Activated CD4-positive, alpha-beta memory T cell treated with anti-CD3 and anti-CD28 coated beads, Interleukin-2, amount 10 ng/mL, durations not matched to agents 7 days and 5 days (primary cell): ENCODE measurements at regions of chr6 and their contacts with region 1.

Region 1: GRCh38 chr6:42879372-42880239 is at the start of gene RPL7L1:
- DNase-seq: peak; percentile 86
- H3K4me3 Mint-ChIP-seq: peak within 1 kb of the TSS; percentile 94
- H3K27ac Mint-ChIP-seq: peak within 1 kb of the TSS; percentile 92
- H3K4me1 Mint-ChIP-seq: peaks cover 31% of the 10 kb centered on the region
- H3K27me3 Mint-ChIP-seq: no peaks in the 10 kb centered on the region
- total RNA-seq, gene RPL7L1: 71.4 to 74.2 TPM

Region 2: DNA sequence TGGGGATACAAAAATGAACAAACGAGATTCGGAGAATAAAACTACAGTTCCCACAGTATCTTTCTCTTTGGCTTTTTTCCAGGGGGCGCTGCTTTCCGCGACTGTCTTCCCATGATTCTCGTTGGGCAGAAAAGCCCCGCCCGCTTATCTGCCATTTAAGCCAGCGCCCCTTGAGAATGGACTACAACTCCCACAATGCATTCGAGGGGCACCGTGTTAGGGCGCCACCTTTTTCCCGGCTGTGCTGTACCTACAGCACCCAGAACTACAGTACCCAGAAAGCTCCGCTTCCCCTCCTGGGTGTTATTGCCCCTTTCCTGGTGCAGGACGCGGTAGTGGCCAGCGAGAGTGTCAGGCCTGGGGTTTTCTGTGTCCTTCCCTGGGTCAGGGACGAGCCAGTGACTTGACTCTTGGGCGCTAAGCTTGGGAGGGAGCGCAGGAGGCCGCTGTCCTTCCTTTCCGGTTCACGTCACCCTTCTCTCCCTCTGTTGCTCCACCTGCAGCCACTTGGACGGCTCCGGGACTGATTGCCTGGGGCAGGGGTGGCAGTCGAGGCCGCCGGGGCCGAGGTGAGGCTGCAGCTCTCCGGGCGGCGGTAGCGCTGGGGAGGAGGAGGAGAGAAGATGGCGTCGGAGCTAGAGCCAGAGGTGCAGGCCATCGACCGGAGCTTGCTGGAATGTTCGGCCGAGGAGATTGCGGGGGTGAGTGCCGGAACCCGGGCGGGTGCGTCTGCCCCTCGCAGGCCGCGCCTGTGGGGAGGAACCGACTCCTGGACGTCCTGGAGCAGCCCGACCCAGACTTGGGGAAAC is 315.7 kb before region 1 on chr6 and contains the start of gene UBR2:
- CTCF ChIA-PET with region 1: interaction called, 3 read pairs
- POLR2A ChIA-PET with region 1: interaction called, 17 read pairs
- DNase-seq: peak; percentile 95
- H3K4me3 Mint-ChIP-seq: peak within 1 kb of the TSS; percentile 92
- H3K27ac Mint-ChIP-seq: peak within 1 kb of the TSS; percentile 83
- H3K4me1 Mint-ChIP-seq: peaks cover 33% of the 10 kb centered on the region
- H3K27me3 Mint-ChIP-seq: no peaks in the 10 kb centered on the region
- total RNA-seq, gene UBR2: 34.0 to 36.2 TPM

Region 3: DNA sequence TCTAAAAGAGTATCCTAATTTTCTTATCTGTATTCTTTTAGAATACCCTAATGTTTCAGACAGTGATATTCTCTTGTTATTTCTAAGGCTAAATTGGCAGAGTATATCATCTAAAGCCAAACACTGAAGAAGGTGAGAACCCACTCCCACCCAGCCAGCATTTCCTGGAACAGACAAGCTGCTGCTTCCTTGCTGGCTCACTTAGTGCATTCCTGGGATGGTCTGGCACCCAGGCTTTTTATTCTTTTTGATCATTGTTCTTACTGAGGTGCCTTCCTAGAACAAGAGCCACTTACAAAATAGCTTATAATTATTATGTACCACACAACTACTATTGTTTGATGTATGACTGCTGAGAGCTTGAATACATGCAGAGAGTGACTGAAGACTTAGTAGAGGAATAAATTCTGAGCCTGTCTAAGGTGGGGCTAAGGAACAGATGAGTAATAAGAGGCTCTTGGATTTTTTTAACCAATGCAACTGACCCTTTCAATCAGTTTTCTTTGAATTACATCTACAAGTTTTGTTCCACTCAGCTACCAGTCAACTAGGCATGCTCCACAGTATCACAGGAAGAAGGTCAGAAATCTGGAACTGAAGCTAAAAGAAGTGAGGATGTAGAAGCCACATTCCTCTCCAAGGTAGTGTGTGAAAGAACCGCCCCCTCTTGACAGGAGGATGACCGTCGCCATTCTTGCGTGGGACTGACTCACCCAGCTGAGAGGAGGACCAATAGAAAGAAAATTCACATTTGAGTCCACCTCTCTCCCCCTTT is 187.3 kb before region 1 on chr6:
- CTCF ChIA-PET with region 1: interaction called, 4 read pairs
- POLR2A ChIA-PET with region 1: interaction called, 11 read pairs
- DNase-seq: no peak
- H3K4me3 Mint-ChIP-seq: no peak overlapping the region
- H3K27ac Mint-ChIP-seq: peak overlapping the region; percentile 29
- H3K4me1 Mint-ChIP-seq: peaks cover 35% of the 10 kb centered on the region
- H3K27me3 Mint-ChIP-seq: no peaks in the 10 kb centered on the region

Region 4: GRCh38 chr6:42771741-42772100 is 107.9 kb before region 1 on chr6:
- CTCF ChIA-PET with region 1: no interaction called
- POLR2A ChIA-PET with region 1: interaction called, 20 read pairs
- DNase-seq: peak; percentile 43
- H3K4me3 Mint-ChIP-seq: peak overlapping the region; percentile 62
- H3K27ac Mint-ChIP-seq: peak overlapping the region; percentile 100
- H3K4me1 Mint-ChIP-seq: peaks cover 64% of the 10 kb centered on the region
- H3K27me3 Mint-ChIP-seq: no peaks in the 10 kb centered on the region

Region 5: GRCh38 chr6:42890311-42891198 is 10.9 kb after region 1 on chr6:
- CTCF ChIA-PET with region 1: interaction called, 8 read pairs
- POLR2A ChIA-PET with region 1: interaction called, 64 read pairs
- DNase-seq: peak; percentile 93
- H3K4me3 Mint-ChIP-seq: peak overlapping the region; percentile 87
- H3K27ac Mint-ChIP-seq: peak overlapping the region; percentile 84
- H3K4me1 Mint-ChIP-seq: peaks cover 23% of the 10 kb centered on the region
- H3K27me3 Mint-ChIP-seq: no peaks in the 10 kb centered on the region